ENCODE measurements at regions of chr5 and their contacts with region 1.

Region 1: DNA sequence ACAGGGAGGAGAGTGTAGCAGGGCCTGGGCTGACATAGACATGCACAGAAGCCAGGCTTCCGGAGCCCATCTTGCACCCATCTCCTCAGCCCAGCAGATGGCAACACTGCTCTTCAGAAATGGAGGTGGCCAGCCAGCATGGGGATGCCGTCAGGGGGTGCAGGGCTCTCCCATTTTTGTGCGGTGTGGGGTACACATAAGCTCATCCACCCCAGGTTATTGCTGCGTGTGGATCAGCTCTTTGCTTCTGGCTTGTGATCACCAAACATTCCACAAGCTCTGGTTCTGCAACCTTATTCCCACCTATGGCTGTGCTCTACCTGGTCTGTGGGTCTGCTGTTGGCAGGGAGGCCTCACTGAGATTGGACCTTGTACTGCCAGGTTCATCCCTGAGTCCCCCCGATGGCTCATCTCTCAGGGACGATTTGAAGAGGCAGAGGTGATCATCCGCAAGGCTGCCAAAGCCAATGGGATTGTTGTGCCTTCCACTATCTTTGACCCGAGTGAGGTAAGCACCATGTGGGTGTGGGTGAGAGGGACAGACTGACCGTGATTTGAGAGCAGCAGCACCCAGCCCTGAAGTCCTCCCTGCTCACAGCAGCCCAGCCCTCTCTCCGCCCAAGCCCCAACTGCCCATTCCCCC is 17.3 kb downstream of the SLC22A5 start:
- DNase-seq: no peak
- H3K4me3 ChIP-seq: no peak overlapping the region
- H3K27ac ChIP-seq: peak overlapping the region; percentile 90 to 94 (median 92)
- H3K4me1 ChIP-seq: peaks cover 56 to 65% (median 61%) of the 10 kb centered on the region in 4 donors
- H3K27me3 ChIP-seq: no peaks in the 10 kb centered on the region
- CTCF ChIP-seq: peak; percentile 85 to 93 (median 91)
- EP300 ChIP-seq: no peak
- POLR2A ChIP-seq: no peak

Region 2: GRCh38 chr5:131550606-131551005 is 836.2 kb before region 1 on chr5:
- intact Hi-C with region 1: no loop called
- DNase-seq: no peak
- H3K4me3 ChIP-seq: no peak overlapping the region
- H3K27ac ChIP-seq: no peak overlapping the region
- H3K4me1 ChIP-seq: no peaks in the 10 kb centered on the region
- H3K27me3 ChIP-seq: no peaks in the 10 kb centered on the region
- CTCF ChIP-seq: no peak
- EP300 ChIP-seq: no peak
- POLR2A ChIP-seq: no peak

Region 3: GRCh38 chr5:132410451-132411381 is 24.0 kb after region 1 on chr5:
- intact Hi-C with region 1: loop called (anchors 2 kb)
- DNase-seq: peak; percentile 94
- H3K4me3 ChIP-seq: peak overlapping the region; percentile 73 to 94 (median 78)
- H3K27ac ChIP-seq: peak overlapping the region; percentile 96 to 99 (median 98)
- H3K4me1 ChIP-seq: peaks cover 63 to 72% (median 69%) of the 10 kb centered on the region in 4 donors
- H3K27me3 ChIP-seq: no peaks in the 10 kb centered on the region
- CTCF ChIP-seq: peak; percentile 38 to 67 (median 47)
- EP300 ChIP-seq: no peak
- POLR2A ChIP-seq: no peak

Region 4: DNA sequence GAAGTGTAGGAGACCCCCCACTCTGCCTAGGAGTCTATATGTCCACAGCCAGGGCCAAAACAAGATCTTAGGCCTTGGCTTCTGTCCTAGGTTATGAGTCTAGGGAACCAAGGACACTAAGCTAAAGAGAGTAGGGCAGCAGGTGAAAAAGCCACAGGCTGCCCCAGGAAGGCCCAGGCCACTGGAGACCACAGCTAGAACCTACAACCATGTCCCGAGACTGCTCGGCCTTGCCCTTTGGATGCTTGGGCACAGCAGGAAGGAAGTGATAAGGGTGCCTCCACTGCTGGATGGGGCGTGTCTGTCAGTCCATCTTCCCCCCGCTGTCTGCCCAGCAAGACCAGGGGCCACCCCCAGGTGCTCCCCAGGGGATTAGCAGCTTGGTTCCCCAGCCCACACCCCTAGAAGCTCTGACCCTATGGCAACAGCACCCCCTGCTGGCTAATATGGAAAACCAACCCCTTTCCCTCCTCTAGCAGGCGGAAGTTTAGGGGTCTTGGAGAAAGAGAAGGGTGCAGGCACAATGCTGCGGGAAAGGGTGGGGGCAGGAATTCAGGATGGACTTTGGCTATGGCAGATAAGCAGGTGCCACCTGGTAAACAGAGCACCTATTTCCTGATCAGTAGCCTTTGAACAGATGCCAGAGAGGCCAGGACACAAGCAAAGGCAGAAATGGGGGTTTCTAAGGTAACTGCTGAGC is 114.3 kb after region 1 on chr5:
- intact Hi-C with region 1: loop called (anchors 2 kb)
- DNase-seq: peak; percentile 92
- H3K4me3 ChIP-seq: no peak overlapping the region
- H3K27ac ChIP-seq: peak overlapping the region; percentile 94 to 98 (median 96)
- H3K4me1 ChIP-seq: peaks cover 38 to 76% (median 57%) of the 10 kb centered on the region in 4 donors
- H3K27me3 ChIP-seq: no peaks in the 10 kb centered on the region
- CTCF ChIP-seq: peak; percentile 83 to 91 (median 87)
- EP300 ChIP-seq: no peak
- POLR2A ChIP-seq: no peak

Region 5: DNA sequence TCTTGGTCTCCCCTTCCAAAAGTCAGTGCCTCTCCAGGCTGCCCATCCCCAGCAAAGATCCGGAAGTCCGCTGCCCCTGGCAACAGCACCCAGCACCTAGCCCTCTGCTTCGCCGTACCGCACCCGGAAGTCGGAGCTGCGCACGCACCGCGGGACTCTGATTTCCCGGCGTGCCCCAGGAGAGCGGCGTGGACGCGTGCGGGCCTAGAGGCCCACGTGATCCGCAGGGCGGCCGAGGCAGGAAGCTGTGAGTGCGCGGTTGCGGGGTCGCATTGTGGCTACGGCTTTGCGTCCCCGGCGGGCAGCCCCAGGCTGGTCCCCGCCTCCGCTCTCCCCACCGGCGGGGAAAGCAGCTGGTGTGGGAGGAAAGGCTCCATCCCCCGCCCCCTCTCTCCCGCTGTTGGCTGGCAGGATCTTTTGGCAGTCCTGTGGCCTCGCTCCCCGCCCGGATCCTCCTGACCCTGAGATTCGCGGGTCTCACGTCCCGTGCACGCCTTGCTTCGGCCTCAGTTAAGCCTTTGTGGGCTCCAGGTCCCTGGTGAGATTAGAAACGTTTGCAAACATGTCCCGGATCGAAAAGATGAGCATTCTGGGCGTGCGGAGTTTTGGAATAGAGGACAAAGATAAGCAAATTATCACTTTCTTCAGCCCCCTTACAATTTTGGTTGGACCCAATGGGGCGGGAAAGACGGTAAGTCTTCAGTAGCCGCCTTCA is 170.2 kb after region 1 on chr5 and contains the start of gene RAD50:
- intact Hi-C with region 1: loop called (anchors 5 kb)
- DNase-seq: peak; percentile 98
- H3K4me3 ChIP-seq: peak within 1 kb of the TSS; percentile 85 to 91 (median 86)
- H3K27ac ChIP-seq: peak within 1 kb of the TSS; percentile 87 to 96 (median 90)
- H3K4me1 ChIP-seq: peaks cover 15 to 31% (median 30%) of the 10 kb centered on the region in 4 donors
- H3K27me3 ChIP-seq: peaks cover 0 to 4% (median 0%) of the 10 kb centered on the region in 4 donors
- CTCF ChIP-seq: no peak
- EP300 ChIP-seq: no peak
- POLR2A ChIP-seq: peak; percentile 90
- total RNA-seq, gene RAD50: 24.0 to 39.9 (median 29.3) TPM

Region 6: DNA sequence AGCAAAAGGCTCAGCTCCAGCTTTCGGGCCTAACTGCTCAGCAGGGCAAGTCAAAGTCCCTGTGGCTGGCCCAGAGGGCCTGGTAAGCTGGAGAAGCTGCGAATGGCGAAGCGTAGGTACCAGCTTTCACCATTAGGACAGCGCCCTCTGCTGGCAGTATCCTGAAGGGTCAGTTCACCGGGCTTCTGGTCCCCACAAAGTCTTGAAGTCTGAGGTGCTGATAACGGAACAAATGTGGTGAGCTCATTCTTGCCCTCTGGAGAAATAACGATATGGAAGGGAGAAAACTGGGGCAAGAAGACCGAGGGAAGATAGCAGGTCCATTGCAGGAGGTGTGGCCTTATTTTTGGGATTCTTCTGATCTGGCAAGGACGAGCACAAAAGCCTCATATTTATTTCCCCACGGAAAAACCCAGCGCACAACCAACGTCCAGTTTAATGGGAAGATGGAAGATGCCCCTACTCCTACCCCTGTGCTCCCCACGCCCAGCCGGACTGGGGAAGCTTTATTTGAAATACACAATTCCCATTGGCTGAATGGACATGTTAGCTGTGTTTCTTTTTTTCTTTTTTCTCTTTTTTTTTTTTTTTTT is 433.5 kb after region 1 on chr5:
- intact Hi-C with region 1: loop called (anchors 10 kb)
- DNase-seq: peak; percentile 98
- H3K4me3 ChIP-seq: peak overlapping the region in 1 of 4 donors; percentile 22
- H3K27ac ChIP-seq: no peak overlapping the region
- H3K4me1 ChIP-seq: peaks cover 0 to 25% (median 23%) of the 10 kb centered on the region in 4 donors
- H3K27me3 ChIP-seq: peaks cover 0 to 18% (median 4%) of the 10 kb centered on the region in 4 donors
- CTCF ChIP-seq: peak; percentile 83 to 94 (median 85)
- EP300 ChIP-seq: no peak
- POLR2A ChIP-seq: no peak